ENCODE measurements at regions of chr9 and their contacts with region 1.

Region 1: DNA sequence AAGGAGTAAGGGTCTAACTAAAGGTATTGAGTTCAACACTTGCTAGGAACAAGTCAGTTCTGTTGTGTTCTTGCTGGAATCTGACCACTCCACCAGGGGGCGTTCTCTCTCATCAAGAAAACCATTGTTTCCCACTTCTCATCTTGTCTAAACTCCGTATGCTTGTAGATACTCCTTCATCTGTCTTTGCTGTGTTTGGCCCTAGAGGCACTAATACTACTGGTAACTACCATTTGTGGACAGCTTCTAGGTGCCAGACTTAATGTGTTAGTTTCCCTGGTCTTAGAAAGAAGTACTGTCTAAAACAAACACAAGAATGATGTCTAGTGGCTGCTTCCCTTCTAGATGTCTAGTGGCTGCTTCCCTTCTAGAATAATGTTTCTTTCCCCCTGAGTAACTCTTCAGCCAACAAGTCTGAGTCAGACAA is 18.7 kb upstream of the PTPDC1 start:
- DNase-seq: peak; percentile 63
- CTCF ChIP-seq: peak; percentile 68

Region 2: GRCh38 chr9:94031946-94032345 is 33.6 kb before region 1 on chr9:
- CTCF ChIA-PET with region 1: no interaction called
- POLR2A ChIA-PET with region 1: no interaction called
- DNase-seq: no peak
- CTCF ChIP-seq: no peak

Region 3: DNA sequence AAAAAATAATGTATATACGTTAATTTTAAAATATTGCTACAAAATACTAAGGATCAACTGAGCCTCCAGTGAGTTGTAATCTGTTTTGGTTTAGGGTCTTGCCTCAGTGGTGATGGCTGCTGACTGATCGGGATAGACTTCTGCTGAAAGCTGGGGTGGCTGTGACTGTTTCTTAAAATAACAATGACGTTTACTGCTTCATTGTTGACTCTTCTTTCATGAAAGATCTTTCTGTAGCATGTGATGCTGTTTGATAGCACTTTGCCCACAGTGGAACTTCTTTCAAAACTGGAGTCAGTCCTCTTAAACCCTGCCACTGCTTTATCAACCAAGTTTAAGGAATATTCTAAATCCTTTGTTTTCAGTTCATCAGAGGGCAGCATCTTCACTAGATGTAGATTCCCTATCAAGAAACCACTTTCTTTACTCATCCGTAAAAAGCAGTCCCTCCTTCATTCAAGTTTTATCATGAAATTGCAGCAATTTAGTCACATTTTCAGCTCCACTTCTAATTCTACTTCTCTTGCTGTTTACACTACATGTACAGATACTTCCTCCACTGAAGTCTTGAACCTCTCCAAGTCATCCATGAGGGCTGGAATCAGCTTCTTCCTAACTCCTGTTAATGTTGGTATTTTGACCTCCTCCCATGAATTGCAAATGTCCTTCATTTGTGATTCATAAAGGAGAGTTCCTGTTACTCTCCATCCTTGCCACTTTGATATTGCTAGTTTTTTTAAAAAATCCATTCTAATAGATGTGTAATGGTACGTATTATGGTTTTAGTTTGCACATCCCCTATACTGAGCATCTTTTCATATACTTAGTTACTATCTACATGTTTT is 22.8 kb before region 1 on chr9:
- CTCF ChIA-PET with region 1: interaction called, 19 read pairs
- POLR2A ChIA-PET with region 1: no interaction called
- DNase-seq: no peak
- CTCF ChIP-seq: no peak

Region 4: DNA sequence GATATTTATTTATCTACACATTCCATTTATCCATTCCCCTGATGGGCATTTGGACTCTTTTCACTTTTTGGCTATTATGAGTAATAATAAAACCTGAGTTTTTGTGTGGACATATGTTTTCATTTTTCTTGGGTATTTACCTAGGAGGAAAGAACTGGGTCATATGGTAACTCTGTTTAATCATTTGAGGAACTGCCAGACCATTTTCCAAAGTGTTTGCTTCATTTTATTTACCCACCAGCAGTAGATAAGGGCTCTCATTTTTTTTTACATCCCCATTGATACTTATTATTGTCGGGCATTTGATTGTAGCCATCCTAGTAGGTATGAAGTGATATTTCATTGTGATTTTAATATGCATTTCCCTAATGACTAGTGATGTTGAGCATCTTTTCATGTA is 11.0 kb after region 1 on chr9:
- CTCF ChIA-PET with region 1: interaction called, 41 read pairs
- POLR2A ChIA-PET with region 1: no interaction called
- DNase-seq: no peak
- CTCF ChIP-seq: no peak

Region 5: DNA sequence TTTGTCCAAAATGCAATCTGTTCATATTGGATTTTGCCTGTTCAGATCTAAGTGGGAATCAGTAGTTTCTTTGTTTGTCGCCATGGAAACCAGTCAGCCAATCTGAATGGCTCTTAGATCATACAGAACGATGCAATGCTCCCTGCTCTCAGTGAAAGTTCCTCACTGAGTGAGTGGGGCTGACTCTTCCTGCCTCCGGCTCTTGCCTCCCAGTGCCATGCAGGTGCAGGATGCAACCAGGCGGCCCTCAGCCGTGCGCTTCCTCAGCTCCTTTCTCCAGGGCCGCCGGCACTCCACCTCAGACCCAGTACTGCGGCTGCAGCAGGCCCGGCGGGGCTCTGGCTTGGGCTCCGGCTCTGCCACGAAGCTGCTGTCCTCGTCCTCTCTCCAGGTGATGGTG is 18.8 kb after region 1 on chr9 and contains the start of gene PTPDC1:
- CTCF ChIA-PET with region 1: interaction called, 24 read pairs
- POLR2A ChIA-PET with region 1: no interaction called
- DNase-seq: no peak
- CTCF ChIP-seq: no peak

Measured in GM10248 (cell line).